ENCODE measurements at regions of chr1 and their contacts with region 1.

Region 1: DNA sequence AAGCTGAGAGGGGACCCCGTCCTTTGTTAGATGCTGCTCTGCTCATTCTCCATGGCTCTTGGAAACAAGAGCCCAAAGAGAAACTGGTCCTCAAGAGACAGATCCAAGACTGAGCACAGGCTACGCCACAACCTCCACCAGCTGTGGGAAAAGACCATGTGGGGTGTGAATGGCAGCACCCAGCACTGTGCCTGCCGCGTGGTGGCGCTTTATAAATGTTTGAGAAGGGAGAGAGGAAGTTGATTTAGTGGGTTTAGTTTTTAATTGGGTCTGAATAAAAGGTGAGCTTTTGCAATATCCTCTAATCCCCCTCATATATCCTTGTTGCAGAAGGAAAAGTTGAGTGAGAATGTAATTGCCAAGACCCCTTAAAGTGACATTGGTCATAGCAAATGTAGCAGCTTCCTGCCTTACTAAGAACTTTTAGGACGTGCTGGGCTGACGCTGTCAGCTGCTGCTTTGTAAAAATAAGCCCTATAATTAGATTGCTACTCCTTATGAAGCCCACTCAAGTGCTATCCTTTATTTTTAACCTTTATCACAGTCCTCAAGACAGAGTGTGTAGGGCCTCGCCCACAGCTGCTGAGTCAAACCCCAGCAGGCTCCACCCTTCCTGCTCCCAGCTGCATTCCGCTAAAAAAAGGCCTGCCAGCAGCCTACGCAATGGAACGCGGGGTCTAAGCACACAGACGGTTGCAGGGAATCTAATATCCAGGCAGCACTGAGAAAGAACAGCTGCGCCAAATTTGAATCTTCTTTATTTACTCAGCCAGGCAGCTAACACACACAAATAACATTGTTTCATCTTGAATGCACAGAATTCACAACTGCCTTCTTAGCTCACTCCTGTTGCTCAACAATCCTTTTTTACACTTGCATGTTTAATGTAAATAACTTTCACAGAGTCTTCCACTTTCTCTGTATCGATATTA is 47.4 kb upstream of the PRDX6 start:
- DNase-seq: peak; percentile 63
- H3K4me3 ChIP-seq: peak overlapping the region; percentile 38
- CTCF ChIP-seq: peak; percentile 74

Region 2: GRCh38 chr1:173444757-173445156 is 15.0 kb after region 1 on chr1:
- CTCF ChIA-PET with region 1: interaction called, 67 read pairs
- POLR2A ChIA-PET with region 1: no interaction called
- DNase-seq: no peak
- H3K4me3 ChIP-seq: no peak overlapping the region
- CTCF ChIP-seq: no peak

Region 3: DNA sequence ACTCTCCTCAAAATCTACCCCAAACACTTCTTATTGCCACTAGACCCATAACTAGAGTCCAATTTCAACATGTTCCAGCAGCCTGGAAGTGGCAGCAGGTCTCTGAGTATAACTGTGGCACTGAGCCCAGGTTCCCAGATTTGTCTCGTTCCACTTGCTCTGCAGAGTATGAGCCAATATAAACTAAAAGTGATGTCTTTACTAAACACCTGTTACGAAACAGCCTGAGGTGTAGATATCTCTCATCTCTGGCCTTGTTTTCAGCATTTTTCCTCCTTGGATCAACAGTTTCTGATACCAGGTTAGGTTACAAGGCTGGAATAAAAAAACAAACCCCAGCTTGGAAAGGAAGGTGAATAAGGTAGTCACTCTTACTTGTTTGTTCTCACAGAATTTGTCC is 22.2 kb after region 1 on chr1:
- CTCF ChIA-PET with region 1: interaction called, 32 read pairs
- POLR2A ChIA-PET with region 1: no interaction called
- DNase-seq: no peak
- H3K4me3 ChIP-seq: no peak overlapping the region
- CTCF ChIP-seq: no peak

Region 4: GRCh38 chr1:173467426-173467825 is 37.7 kb after region 1 on chr1:
- CTCF ChIA-PET with region 1: interaction called, 16 read pairs
- POLR2A ChIA-PET with region 1: no interaction called
- DNase-seq: peak; percentile 58
- H3K4me3 ChIP-seq: no peak overlapping the region
- CTCF ChIP-seq: no peak

Region 5: DNA sequence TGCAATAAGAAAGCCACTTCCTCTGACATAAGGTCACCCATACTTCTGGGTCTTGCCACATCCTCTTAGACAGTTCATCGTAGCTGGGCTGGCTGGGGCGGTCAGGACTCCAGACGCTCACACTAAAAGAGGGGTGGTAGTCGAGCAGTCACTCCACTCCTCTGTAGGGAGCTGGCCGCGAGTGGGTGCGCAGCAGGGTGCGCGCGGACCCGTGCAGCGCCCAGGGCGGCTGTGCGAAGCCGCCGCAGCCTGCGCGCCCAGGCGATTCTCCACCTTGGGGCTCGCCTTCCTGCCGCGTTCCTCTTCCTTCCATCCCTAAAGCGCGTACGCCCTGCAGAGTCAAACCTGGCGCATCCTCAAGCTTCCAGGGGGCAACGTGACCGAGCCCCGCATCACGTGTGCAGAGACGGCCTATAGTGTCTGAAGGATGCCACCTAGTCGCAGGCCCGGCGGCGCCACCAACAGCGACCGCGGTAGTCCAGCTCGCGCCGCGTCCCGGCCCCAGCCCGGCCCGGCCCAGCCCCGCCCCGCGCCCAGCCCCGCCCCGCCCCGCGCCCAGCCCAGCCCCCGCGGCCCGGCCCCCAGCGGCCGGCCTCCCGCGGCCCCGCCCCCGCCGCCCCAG is 47.0 kb after region 1 on chr1:
- CTCF ChIA-PET with region 1: interaction called, 32 read pairs
- POLR2A ChIA-PET with region 1: interaction called, 5 read pairs
- DNase-seq: peak; percentile 31
- H3K4me3 ChIP-seq: peak overlapping the region; percentile 90
- CTCF ChIP-seq: no peak

Region 6: GRCh38 chr1:173824331-173825081 is 394.8 kb after region 1 on chr1 and contains the starts of genes CENPL and DARS2:
- CTCF ChIA-PET with region 1: interaction called, 69 read pairs
- POLR2A ChIA-PET with region 1: interaction called, 4 read pairs
- DNase-seq: peak; percentile 90
- H3K4me3 ChIP-seq: peak within 1 kb of the TSS; percentile 97
- CTCF ChIP-seq: no peak

Measured in AG04449 (cell line).